ENCODE measurements at regions of chr1 and their contacts with region 1.

Region 1: DNA sequence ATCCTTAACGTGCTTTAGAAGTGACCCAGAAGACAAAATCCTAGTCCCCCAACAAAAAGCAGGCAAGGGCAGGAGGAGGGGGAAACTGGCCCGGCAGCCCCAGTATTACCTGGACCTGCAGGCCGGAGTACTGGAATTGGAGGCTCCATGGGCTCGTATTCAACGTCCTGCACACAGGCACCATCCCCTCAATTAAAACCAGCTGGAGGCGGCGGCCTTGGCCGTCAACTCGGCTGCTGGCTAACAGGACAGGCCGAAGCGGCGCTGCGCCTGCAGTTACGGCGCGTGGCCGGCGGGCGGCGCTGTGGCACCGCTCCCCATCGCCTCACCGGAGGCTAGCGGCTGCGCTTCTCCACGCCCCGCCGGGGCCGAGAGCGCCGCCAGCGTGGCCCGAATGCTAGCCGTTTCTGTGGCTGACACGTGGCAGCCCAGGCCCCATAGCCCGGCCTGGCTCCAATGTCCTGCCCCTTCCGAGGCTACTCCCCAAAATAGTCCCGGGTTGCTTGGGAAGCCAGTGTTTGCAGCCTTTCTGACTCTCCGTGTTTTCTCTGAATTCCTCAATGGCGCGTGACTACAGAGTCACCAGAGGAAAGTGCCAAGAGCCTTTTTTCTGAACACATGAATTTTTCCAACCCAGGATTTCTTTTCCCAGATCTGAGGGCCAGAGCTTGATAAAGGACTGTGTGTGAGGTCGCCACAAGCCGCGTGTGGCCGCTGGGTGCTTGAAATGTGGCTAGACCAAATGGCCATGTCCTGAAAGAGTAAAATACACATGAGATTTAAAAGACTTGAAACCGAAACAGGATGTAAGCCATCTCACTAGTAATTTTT is 82.5 kb downstream of the HHIPL2 start:
- DNase-seq: peak; percentile 81
- ATAC-seq: peak; percentile 99
- H3K4me3 ChIP-seq: peak overlapping the region; percentile 63 to 80
- H3K27ac ChIP-seq: peak overlapping the region; percentile 99
- H3K4me1 ChIP-seq: peaks cover 8% of the 10 kb centered on the region
- H3K27me3 ChIP-seq: no peaks in the 10 kb centered on the region
- CTCF ChIP-seq: peak; percentile 100

Region 2: DNA sequence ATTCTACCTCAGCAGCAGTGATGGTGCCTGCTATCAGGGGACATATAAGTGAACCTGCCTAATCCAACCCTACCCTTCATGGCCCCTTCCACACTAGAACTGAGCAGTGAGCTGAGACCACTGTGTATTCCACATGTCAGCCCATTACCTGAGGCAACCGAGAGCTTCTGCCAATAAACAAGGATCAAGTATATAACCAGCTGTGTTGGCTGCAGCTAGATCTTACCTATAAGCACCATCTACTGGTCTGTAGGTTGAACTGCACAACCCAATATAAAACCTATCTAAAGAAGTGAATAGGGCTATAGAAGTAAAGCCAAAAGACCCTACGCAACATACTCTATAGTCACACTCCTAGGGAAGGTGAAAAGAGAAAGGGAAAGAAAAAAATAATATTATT is 294.4 kb before region 1 on chr1:
- CTCF ChIA-PET with region 1: no interaction called
- POLR2A ChIA-PET with region 1: no interaction called
- in situ Hi-C with region 1: no loop called
- intact Hi-C with region 1: no loop called
- DNase-seq: peak; percentile 10
- ATAC-seq: peak; percentile 70
- H3K4me3 ChIP-seq: no peak overlapping the region
- H3K27ac ChIP-seq: no peak overlapping the region
- H3K4me1 ChIP-seq: no peaks in the 10 kb centered on the region
- H3K27me3 ChIP-seq: no peaks in the 10 kb centered on the region
- CTCF ChIP-seq: peak; percentile 62

Region 3: GRCh38 chr1:222579316-222579715 is 113.9 kb after region 1 on chr1:
- CTCF ChIA-PET with region 1: no interaction called
- POLR2A ChIA-PET with region 1: no interaction called
- in situ Hi-C with region 1: no loop called
- intact Hi-C with region 1: no loop called
- DNase-seq: no peak
- ATAC-seq: no peak
- H3K4me3 ChIP-seq: no peak overlapping the region
- H3K27ac ChIP-seq: no peak overlapping the region
- H3K4me1 ChIP-seq: peaks cover 17% of the 10 kb centered on the region; the same call in 1 of the 2 replicates
- H3K27me3 ChIP-seq: no peaks in the 10 kb centered on the region
- CTCF ChIP-seq: no peak

Region 4: DNA sequence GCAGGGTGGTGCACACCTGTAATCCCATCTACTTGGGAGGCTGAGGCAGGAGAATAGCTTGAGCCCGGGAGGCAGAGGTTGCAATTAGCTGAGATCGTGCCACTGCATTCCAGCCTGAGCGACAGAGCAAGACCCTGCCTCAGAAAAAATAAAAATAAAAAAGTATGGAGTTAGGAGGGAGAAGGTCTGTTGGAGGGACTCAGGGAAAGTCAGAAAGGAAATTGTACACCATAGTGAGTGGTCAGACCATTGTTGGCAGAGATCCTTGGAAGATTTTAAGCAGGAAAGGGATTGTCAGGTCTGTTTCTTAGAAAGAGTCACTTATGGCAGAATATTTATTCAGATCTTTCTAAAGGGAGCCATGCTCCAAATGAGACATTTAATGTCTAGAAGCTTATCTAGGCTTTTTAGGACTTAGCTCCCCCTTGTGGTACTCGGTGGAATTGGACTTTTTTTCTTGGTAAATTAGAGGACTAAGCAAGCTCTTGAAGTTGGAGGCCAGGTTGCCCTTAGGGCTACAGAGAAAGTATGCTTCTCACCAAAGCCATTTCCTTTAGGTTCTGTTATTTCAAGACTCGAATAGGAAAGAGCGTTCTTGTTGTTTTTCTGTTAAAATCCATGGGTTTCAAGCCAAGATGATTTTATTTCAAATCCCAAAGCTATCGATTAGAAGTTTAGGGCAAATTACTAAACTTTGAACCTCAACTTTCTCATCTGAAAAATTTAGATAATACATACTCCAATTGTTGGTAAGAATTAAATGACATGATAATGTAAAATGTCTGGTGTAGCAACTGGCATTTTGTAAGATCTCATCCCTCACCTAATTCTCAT is 169.0 kb after region 1 on chr1:
- CTCF ChIA-PET with region 1: interaction called, 34 read pairs
- POLR2A ChIA-PET with region 1: no interaction called
- in situ Hi-C with region 1: no loop called
- intact Hi-C with region 1: loop called (anchors 1 kb)
- DNase-seq: peak; percentile 91
- ATAC-seq: peak; percentile 94
- H3K4me3 ChIP-seq: no peak overlapping the region
- H3K27ac ChIP-seq: no peak overlapping the region
- H3K4me1 ChIP-seq: no peaks in the 10 kb centered on the region
- H3K27me3 ChIP-seq: no peaks in the 10 kb centered on the region
- CTCF ChIP-seq: peak; percentile 88

Region 5: GRCh38 chr1:222713091-222713961 is 247.9 kb after region 1 on chr1:
- CTCF ChIA-PET with region 1: no interaction called
- POLR2A ChIA-PET with region 1: no interaction called
- in situ Hi-C with region 1: no loop called
- intact Hi-C with region 1: loop called (anchors 5 kb)
- DNase-seq: peak; percentile 83
- ATAC-seq: peak; percentile 85
- H3K4me3 ChIP-seq: peak overlapping the region; percentile 80 to 99
- H3K27ac ChIP-seq: peak overlapping the region; percentile 100
- H3K4me1 ChIP-seq: peaks cover 9% of the 10 kb centered on the region
- H3K27me3 ChIP-seq: no peaks in the 10 kb centered on the region
- CTCF ChIP-seq: no peak